ENCODE measurements at regions of chr21 and their contacts with region 1.

Region 1: DNA sequence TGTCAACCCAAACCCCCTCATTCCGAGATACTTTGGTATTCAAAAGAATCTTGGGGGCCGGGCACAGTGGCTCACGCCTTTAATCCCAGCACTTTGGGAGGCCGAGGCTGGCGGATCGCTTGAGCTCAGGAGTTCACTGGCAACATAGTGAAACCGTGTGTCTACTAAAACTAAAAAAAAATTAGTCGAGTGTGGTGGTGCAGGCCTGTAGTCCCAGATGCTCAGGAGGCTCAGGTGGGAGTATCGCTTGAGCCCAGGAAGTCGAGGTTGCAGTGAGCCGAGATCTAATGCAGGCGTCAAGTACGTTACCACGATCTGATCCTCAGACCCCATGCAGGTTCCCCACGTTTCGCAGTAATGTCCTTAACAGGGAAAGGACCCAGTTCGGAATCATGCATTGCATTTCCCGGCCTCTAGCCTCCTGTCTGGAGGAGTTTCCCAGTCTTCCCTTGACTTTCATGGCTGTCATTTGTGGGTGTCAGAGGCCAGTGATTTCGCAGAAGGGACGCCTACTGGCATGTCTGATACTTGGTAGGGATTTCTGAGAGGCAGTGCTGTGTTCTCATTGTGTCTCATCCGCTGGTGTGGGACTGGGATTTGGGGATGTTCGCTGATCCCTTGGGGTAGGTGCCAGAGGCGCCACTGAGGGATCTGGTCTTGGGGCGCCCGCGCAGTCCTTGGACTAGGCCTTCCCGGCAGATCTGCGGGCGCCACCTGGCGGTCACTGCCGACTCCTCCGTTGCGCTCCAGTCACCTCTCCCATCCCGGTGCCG is 39.3 kb upstream of the HMGN1 start:
- DNase-seq: peak; percentile 95 to 98
- ATAC-seq: peak; percentile 92
- H3K4me3 ChIP-seq: peak overlapping the region; percentile 29 to 45
- H3K27ac ChIP-seq: peak overlapping the region in 1 of 2 donors; percentile 38
- H3K4me1 ChIP-seq: no peaks in the 10 kb centered on the region
- H3K27me3 ChIP-seq: no peaks in the 10 kb centered on the region

Region 2: GRCh38 chr21:39313571-39314142 is 74.6 kb before region 1 on chr21 and contains the start of gene BRWD1:
- intact Hi-C with region 1: loop called (anchors 2 to 5 kb)
- DNase-seq: peak; percentile 88 to 95
- ATAC-seq: peak; percentile 93
- H3K4me3 ChIP-seq: peak within 1 kb of the TSS; percentile 94 to 98
- H3K27ac ChIP-seq: peak within 1 kb of the TSS; percentile 34 to 61
- H3K4me1 ChIP-seq: no peaks in the 10 kb centered on the region
- H3K27me3 ChIP-seq: no peaks in the 10 kb centered on the region
- total RNA-seq, gene BRWD1: 41.8 to 68.5 TPM

Region 3: DNA sequence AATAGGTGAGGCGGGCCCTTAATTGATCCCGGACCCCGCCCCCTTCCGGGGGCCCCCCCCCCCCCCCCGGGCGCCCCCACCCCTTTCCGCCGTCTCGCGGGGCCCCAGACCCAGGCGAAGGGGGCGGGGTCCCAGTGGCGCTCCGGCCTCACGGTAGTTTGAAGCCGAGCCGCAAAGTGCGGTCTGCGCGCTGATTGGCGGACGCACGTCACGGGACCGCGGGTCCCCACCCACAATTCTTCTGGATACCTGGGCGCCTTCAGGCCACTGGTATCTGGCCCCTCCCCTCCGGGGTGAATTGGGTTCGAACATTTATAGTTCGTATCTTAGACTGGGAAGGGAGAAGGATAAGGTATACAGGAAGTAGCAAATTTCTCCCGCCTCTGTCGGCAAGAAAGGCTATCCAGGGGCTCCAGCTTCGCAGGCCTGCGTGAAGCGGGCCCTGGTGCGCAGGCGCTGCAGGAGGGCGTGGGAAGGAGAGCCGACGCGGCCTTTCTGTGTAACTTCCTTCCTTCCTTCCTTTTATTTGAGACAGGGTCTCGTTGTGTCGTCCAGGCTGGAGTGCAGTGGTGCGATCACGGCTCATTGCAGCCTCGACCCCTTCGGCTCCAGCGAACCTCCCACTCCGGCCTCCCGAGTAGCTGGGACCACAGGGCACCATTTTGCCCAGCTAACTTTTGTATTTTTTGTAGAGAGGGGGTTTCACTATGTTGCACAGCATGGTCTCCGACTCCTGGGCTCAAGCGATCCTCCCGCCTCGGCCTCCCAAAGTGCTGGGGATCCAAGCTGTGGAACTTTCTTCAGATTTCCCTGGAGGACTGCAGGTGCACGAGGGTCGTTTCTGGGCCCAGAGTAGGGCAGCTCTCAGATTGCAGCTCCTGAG is 38.8 kb before region 1 on chr21:
- intact Hi-C with region 1: loop called in 1 of 2 experiments (anchors 5 kb)
- DNase-seq: peak; percentile 98
- ATAC-seq: peak; percentile 98
- H3K4me3 ChIP-seq: peak overlapping the region; percentile 92 to 99
- H3K27ac ChIP-seq: peak overlapping the region in 1 of 2 donors; percentile 22
- H3K4me1 ChIP-seq: peaks cover 0 to 4% of the 10 kb centered on the region in 2 donors
- H3K27me3 ChIP-seq: no peaks in the 10 kb centered on the region

Region 4: DNA sequence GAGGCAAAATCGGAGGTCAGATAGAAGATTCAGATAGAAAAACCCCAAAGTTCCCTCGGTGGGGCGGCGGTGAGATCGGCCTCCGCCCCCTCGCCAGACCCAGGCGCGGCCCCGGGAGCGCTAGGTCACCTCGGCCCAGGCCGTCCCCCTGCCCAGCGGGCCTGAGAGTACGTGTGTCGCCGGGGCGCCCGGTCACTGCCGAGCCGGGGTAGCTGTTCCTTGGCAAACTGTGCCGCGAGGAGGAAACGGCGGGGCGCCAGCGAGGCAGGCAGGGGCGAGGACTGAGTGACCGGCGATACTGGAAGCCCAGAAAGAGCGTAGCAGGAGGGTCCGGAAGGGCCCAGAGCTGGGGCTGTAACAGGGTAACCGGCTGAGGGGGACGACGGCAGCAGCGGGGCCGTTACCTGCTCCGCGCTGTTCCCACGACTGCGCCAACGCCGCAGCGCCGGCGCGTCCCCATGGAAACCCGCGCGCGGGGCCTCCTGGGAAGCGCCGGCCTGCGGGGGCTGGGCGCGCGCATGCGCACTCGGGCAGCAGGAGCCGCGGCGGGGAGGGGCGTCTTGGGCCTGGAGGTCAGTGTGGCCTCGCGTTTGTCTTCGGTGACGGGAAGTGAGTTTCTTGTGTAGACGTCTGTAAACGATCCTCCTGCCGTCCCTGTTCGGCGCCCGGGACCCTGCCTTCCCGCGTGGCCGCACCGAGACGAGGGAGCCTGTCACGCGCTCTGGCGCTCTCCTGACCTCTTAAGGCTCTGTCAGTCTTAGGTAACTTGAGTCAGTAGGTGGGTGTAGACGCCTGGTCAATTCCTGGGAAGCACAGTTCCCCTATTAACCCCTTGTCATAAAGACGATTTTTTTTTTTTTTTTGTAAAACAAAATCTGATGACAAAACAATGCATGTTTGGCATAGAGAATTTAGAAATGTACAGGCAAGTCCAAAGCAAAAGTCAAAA is 57.4 kb after region 1 on chr21 and contains the start of gene LCA5L:
- intact Hi-C with region 1: loop called in 1 of 2 experiments (anchors 5 kb)
- DNase-seq: peak; percentile 93 to 97
- ATAC-seq: peak; percentile 96
- H3K4me3 ChIP-seq: peak within 1 kb of the TSS; percentile 66 to 80
- H3K27ac ChIP-seq: peak within 1 kb of the TSS; percentile 62 to 81
- H3K4me1 ChIP-seq: no peaks in the 10 kb centered on the region
- H3K27me3 ChIP-seq: no peaks in the 10 kb centered on the region
- total RNA-seq, gene LCA5L: 0.39 to 1.8 TPM